Heart right ventricle (tissue), 16 donors: ENCODE measurements at regions of chr3 and their contacts with region 1.

Region 1: GRCh38 chr3:126180477-126181397 is at the start of gene ALDH1L1:
- DNase-seq: peak; percentile 72 to 84
- ATAC-seq: peak; percentile 92 to 97 (median 95)
- H3K4me3 ChIP-seq: peak within 1 kb of the TSS; percentile 51 to 81 (median 67)
- H3K27ac ChIP-seq: peak within 1 kb of the TSS; percentile 77 to 95 (median 92)
- H3K4me1 ChIP-seq: peaks cover 0 to 27% (median 10%) of the 10 kb centered on the region in 9 donors
- H3K27me3 ChIP-seq: peaks cover 0 to 37% (median 9%) of the 10 kb centered on the region in 7 donors
- CTCF ChIP-seq: peak in 1 of 9 donors; percentile 16
- total RNA-seq, gene ALDH1L1: 25.5 to 45.9 (median 32.1) TPM

Region 2: DNA sequence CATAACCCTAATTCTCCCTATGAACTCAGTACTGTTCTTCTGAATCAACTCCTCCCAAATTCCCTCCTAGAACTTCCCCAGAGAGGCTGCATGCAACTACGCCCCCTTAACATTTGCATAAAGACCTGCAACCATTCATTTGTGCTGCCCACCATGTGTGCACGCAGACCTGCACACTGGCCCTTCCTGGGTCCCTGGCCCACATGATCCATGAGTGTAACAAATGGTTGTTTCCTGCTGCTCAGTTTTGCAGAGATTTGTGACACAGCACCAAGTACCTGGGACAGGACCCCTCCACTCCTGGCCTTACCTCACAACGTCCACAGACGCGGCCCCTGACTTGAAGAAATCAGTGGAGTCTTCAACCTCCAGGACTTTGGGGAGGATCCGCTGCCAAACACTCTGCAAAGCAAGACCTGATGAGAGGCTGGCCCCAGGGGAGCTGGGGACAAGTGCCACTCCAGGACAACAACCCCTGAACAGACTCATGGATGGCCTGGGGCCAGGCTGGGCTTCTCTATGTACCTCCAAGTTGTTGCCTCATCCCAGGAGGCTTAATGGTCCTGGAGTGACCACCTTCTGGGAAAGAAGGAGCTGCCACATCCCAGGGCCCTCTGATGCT is 34.1 kb before region 1 on chr3:
- intact Hi-C with region 1: no loop called
- DNase-seq: peak; percentile 2
- ATAC-seq: peak in 1 of 8 donors; percentile 16
- H3K4me3 ChIP-seq: no peak overlapping the region
- H3K27ac ChIP-seq: no peak overlapping the region
- H3K4me1 ChIP-seq: no peaks in the 10 kb centered on the region
- H3K27me3 ChIP-seq: peaks cover 0 to 11% (median 0%) of the 10 kb centered on the region in 7 donors
- CTCF ChIP-seq: no peak

Region 3: GRCh38 chr3:126197854-126198584 is 17.3 kb after region 1 on chr3:
- intact Hi-C with region 1: loop called in 1 of 10 experiments (anchors 1 kb)
- DNase-seq: peak; percentile 56
- ATAC-seq: peak; percentile 68 to 93 (median 83)
- H3K4me3 ChIP-seq: no peak overlapping the region
- H3K27ac ChIP-seq: peak overlapping the region in 1 of 10 donors; percentile 34
- H3K4me1 ChIP-seq: peaks cover 0 to 11% (median 0%) of the 10 kb centered on the region in 9 donors
- H3K27me3 ChIP-seq: no peaks in the 10 kb centered on the region
- CTCF ChIP-seq: peak in 8 of 9 donors; percentile 45 to 73 (median 68)

Region 4: DNA sequence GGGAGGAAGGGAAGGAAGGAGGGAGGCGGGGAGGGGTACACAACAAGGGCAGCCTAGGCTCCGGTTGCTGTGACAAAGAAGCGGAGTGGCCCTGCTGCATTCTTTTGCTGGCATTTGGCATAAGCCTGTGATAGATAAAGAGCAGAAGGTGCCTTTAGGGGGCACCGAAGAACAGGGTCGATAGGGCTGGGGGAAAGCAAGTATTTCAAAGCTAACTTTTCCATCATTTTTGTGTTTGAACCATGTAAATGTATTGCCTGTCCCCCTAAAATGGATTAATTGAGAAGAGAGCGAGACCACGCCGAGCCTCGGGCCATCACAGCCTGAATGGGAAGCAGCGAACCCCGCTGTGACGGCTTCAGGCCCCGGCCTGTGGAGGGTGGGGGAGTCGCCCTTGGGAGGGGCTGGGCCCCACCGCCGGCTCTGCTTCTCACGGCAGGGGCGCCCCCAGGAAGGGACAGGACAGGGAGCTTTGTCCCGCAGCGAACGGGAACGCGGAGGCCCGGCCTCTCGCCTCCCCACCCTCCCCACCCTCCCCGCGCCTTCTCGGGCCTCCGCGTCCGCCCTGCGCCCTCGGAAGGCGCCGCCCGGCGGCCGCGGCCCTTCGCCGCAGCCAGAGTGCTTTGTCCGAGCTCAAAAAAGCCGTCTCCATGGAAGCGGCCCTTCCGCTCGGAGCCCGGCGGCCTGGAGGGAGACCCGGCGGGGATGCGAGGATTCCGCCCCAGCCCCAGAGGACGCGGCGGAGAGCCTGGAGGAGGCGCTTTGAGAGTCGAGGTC is 32.1 kb after region 1 on chr3:
- intact Hi-C with region 1: loop called in 1 of 10 experiments (anchors 5 kb)
- DNase-seq: peak; percentile 37 to 67
- ATAC-seq: peak; percentile 66 to 81 (median 75)
- H3K4me3 ChIP-seq: peak overlapping the region; percentile 30 to 61 (median 56)
- H3K27ac ChIP-seq: peak overlapping the region in 9 of 10 donors; percentile 55 to 77 (median 72)
- H3K4me1 ChIP-seq: peaks cover 0 to 36% (median 23%) of the 10 kb centered on the region in 9 donors
- H3K27me3 ChIP-seq: peaks cover 0 to 69% (median 21%) of the 10 kb centered on the region in 7 donors
- CTCF ChIP-seq: peak in 8 of 9 donors; percentile 17 to 77 (median 41)

Region 5: DNA sequence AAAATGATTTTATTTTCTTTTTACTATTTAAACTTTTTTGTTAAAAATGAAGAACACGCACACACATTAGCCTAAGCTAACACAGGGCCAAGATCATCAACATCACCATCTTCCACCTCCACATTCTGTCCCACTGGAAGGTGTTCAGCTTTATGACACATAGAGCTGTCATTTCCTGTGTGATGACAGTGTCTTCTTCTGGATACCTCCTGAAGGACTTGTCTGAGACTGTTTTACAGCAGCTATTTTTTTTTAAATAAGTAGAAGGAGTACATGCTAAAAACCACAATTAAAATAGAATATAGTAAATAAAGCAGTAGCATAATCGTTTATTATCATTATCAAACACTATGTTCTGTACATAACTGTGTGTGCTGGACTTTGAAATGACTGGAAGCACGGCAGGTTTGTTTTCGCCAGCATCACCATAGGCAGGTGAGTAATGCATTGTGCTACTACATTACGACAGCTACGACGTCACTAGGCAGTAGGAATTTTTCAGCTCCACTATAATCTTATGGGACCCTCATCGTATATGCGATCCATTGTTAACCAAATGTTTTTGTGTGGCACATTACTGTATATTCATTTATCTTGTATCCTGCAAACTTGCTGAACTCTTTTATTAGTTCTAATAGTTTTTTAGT is 103.6 kb after region 1 on chr3:
- intact Hi-C with region 1: no loop called
- DNase-seq: no peak
- ATAC-seq: no peak
- H3K4me3 ChIP-seq: no peak overlapping the region
- H3K27ac ChIP-seq: no peak overlapping the region
- H3K4me1 ChIP-seq: peaks cover 0 to 30% (median 17%) of the 10 kb centered on the region in 9 donors
- H3K27me3 ChIP-seq: peaks cover 0 to 44% (median 5%) of the 10 kb centered on the region in 7 donors
- CTCF ChIP-seq: no peak